PC-9 (cell line): ENCODE measurements at regions of chr7 and their contacts with region 1.

Region 1: GRCh38 chr7:107743567-107744344 is at the start of gene CBLL1:
- DNase-seq: peak; percentile 84 to 98
- H3K4me3 ChIP-seq: peak within 1 kb of the TSS; percentile 72
- H3K27ac ChIP-seq: peak within 1 kb of the TSS; percentile 88
- H3K4me1 ChIP-seq: peaks cover 24% of the 10 kb centered on the region
- H3K27me3 ChIP-seq: no peaks in the 10 kb centered on the region
- CTCF ChIP-seq: no peak; the same call in none of the 2 replicates
- total RNA-seq, gene CBLL1: 24.5 and 31.3 TPM in 2 replicates

Region 2: GRCh38 chr7:107168233-107169119 is 575.3 kb before region 1 on chr7 and contains the start of gene HBP1:
- CTCF ChIA-PET with region 1: no interaction called
- POLR2A ChIA-PET with region 1: interaction called, 4 read pairs
- intact Hi-C with region 1: loop called (anchors 1 kb)
- DNase-seq: peak; percentile 99
- H3K4me3 ChIP-seq: peak within 1 kb of the TSS; percentile 77
- H3K27ac ChIP-seq: peak within 1 kb of the TSS; percentile 86
- H3K4me1 ChIP-seq: peaks cover 26% of the 10 kb centered on the region
- H3K27me3 ChIP-seq: no peaks in the 10 kb centered on the region
- CTCF ChIP-seq: no peak
- total RNA-seq, gene HBP1: 60.0 and 62.1 TPM in 2 replicates

Region 3: DNA sequence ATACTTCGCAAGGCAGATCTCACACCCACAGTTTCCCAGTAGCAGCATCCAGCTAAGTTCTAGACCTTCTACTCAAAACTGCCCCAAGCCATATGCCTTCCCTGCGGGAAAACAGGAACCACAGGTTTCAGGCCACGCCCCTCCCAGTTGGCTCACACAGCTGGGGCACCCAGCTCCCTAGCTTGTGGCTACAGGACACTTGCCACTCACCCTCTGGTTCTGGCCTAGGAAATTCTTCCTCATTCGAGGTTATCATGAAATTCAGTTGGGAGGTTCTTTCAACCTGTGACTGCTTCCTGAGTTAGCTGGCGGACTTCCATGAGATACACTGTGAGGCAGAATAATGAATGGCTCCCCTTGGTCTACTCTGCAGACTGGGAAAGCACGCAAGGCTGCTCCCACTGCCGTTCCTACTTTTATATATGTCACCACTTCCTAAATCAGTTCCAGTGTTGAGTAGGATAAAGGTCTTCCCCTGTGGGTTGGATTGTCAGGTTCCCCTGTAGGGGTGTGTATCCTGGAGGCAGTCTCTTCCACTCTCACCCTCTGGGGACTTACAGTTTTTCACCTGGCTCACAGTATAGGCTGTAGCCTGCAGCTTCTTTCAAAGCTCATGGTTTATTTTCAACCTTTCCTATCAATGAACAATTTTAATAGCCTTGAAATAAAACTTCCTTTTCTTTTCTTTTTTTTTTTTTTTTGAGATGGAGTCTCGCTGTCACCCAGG is 237.0 kb before region 1 on chr7:
- CTCF ChIA-PET with region 1: no interaction called
- POLR2A ChIA-PET with region 1: no interaction called
- intact Hi-C with region 1: loop called (anchors 1 kb)
- DNase-seq: peak; percentile 97 to 98
- H3K4me3 ChIP-seq: peak overlapping the region; percentile 43; the same call in 1 of the 2 replicates
- H3K27ac ChIP-seq: peak overlapping the region; percentile 95
- H3K4me1 ChIP-seq: peaks cover 40% of the 10 kb centered on the region
- H3K27me3 ChIP-seq: no peaks in the 10 kb centered on the region
- CTCF ChIP-seq: no peak

Region 4: DNA sequence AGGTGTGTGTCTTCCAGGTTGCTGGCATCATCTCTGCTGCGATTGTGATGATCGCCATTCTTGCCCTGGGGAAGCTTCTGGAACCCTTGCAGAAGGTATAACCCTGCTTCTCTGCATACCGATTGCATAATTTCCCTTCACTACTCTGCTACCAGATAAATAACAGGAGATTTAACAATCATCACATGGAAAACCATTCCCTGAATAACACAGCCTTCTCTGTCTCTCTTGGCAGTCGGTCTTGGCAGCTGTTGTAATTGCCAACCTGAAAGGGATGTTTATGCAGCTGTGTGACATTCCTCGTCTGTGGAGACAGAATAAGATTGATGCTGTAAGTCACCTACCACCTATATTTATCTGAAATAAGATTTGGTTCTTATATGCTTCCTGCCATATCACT is 49.4 kb before region 1 on chr7:
- CTCF ChIA-PET with region 1: no interaction called
- POLR2A ChIA-PET with region 1: no interaction called
- intact Hi-C with region 1: no loop called
- DNase-seq: no peak
- H3K4me3 ChIP-seq: no peak overlapping the region
- H3K27ac ChIP-seq: no peak overlapping the region
- H3K4me1 ChIP-seq: no peaks in the 10 kb centered on the region
- H3K27me3 ChIP-seq: no peaks in the 10 kb centered on the region
- CTCF ChIP-seq: no peak

Region 5: DNA sequence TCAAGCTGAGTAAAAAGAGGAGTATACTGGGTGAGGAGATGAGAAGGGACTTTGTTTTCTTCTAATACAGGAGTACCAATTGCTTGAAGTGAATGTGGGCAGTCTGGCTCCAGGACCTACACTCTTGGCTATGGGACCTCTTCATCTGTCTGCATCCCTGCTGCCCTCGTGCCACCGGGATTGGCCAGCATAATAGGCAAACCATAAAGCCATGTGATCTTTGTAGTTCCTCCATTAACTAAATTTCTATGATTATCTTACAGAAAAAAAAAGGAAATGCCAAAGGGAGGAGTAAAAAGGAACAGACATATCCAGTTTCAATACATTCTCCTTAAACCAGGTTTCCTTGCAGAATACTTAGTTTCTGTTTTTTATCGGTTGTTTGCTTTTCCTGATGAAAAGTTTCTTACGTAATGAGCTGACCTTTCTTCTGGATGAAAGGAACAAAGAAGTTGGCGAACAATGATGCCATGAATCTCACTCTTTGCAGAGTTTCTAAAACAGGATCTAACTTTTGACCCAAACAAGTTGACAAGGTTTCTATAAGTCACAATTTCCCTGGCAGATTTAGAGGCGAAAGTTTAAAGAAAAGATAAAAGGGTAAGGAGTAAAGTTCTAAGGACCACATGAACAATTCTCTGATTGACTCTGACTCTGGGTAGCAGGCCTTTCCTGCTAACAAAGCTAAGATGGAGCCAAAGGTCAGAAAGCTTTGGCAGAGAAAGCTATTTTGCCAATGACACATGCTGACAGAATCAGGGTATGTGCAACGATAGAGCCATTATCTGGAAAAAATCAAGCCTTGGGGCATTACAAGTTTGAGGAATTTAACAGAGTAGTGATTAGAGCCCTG is 205.1 kb after region 1 on chr7:
- CTCF ChIA-PET with region 1: no interaction called
- POLR2A ChIA-PET with region 1: interaction called, 15 read pairs
- intact Hi-C with region 1: no loop called
- DNase-seq: peak; percentile 57 to 94
- H3K4me3 ChIP-seq: peak overlapping the region; percentile 12; the same call in 1 of the 2 replicates
- H3K27ac ChIP-seq: peak overlapping the region; percentile 86
- H3K4me1 ChIP-seq: peaks cover 76% of the 10 kb centered on the region
- H3K27me3 ChIP-seq: no peaks in the 10 kb centered on the region
- CTCF ChIP-seq: no peak

Region 6: GRCh38 chr7:108497082-108497725 is 753.4 kb after region 1 on chr7:
- CTCF ChIA-PET with region 1: no interaction called
- POLR2A ChIA-PET with region 1: no interaction called
- intact Hi-C with region 1: loop called (anchors 10 kb)
- DNase-seq: peak; percentile 40 to 49
- H3K4me3 ChIP-seq: no peak overlapping the region
- H3K27ac ChIP-seq: no peak overlapping the region
- H3K4me1 ChIP-seq: no peaks in the 10 kb centered on the region
- H3K27me3 ChIP-seq: no peaks in the 10 kb centered on the region
- CTCF ChIP-seq: peak; percentile 92